Endothelial cell of umbilical vein (primary cell): ENCODE measurements at regions of chr7 and their contacts with region 1.

Region 1: DNA sequence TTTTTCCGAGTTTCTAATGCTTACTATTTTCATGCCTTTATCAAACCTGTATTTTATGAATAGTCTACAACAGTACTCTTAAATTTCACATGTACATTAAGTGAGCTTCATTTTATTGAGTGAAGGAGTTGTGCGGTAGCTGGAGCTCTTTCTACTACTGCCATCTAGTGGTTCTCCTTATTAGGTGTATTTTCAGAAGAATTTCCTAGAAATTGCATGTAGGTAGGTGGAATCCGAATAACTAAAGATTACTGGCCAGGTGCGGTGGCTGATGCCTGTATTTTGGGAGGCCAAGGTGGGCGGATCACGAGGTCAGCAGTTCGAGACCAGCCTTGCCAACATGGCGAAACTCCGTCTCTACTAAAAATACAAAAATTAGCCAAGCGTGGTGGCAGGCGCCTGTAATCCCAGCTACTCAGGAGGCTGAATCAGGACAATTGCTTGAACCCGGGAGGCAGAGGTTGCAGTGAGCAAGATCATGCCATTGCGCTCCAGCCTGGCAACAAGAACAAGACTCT is 38.3 kb downstream of the LRRC72 start:
- DNase-seq: peak; percentile 64
- H3K4me3 ChIP-seq: no peak overlapping the region
- H3K27ac ChIP-seq: no peak overlapping the region
- H3K4me1 ChIP-seq: peaks cover 6% of the 10 kb centered on the region
- H3K27me3 ChIP-seq: no peaks in the 10 kb centered on the region
- CTCF ChIP-seq: peak; percentile 42 to 61
- POLR2A ChIP-seq: no peak

Region 2: GRCh38 chr7:14717816-14718215 is 1847.2 kb before region 1 on chr7:
- CTCF ChIA-PET with region 1: interaction called, 12 read pairs
- POLR2A ChIA-PET with region 1: no interaction called
- dilution Hi-C with region 1: no loop called
- intact Hi-C with region 1: no loop called
- DNase-seq: peak; percentile 48
- H3K4me3 ChIP-seq: no peak overlapping the region
- H3K27ac ChIP-seq: no peak overlapping the region
- H3K4me1 ChIP-seq: peaks cover 7% of the 10 kb centered on the region
- H3K27me3 ChIP-seq: no peaks in the 10 kb centered on the region
- CTCF ChIP-seq: peak; percentile 21 to 30
- POLR2A ChIP-seq: no peak

Region 3: DNA sequence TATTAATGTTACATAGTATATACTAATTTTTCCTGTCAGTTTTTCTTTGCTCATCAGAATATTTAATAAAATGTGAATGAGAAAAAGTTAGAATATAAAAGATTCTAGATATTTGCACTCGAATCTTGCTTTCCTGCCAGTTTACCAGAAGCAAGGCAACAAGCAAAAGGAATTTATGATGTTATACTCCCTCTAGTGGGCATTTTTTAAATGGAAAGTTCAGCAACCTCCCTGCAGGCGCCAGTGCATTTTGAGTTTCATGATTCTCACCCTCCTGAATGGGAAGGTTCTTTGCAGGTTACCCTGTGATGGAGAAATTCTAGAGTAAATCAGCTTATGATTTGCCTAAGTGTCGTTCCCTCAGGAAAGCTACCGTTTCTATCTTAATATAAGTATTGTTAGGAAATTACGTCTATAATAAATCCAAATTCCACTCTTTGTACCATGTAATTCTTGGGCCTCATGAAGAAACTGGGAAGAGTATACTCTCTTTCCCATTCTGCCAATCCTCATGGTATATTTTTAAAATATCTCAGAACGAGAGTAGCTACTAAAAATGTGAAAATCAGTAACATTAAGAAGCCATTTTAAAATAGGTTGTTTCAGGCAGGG is 493.6 kb before region 1 on chr7:
- CTCF ChIA-PET with region 1: interaction called, 13 read pairs
- POLR2A ChIA-PET with region 1: no interaction called
- dilution Hi-C with region 1: no loop called
- intact Hi-C with region 1: no loop called
- DNase-seq: peak; percentile 70
- H3K4me3 ChIP-seq: no peak overlapping the region
- H3K27ac ChIP-seq: no peak overlapping the region
- H3K4me1 ChIP-seq: peaks cover 12% of the 10 kb centered on the region
- H3K27me3 ChIP-seq: no peaks in the 10 kb centered on the region
- CTCF ChIP-seq: peak; percentile 41 to 57
- POLR2A ChIP-seq: no peak

Region 4: GRCh38 chr7:16098585-16099179 is 466.3 kb before region 1 on chr7:
- CTCF ChIA-PET with region 1: interaction called, 35 read pairs
- POLR2A ChIA-PET with region 1: no interaction called
- dilution Hi-C with region 1: no loop called
- intact Hi-C with region 1: loop called (anchors 1 kb)
- DNase-seq: peak; percentile 85
- H3K4me3 ChIP-seq: no peak overlapping the region
- H3K27ac ChIP-seq: peak overlapping the region; percentile 86
- H3K4me1 ChIP-seq: peaks cover 22% of the 10 kb centered on the region
- H3K27me3 ChIP-seq: no peaks in the 10 kb centered on the region
- CTCF ChIP-seq: peak; percentile 64 to 70
- POLR2A ChIP-seq: no peak

Region 5: GRCh38 chr7:16129431-16130116 is 435.4 kb before region 1 on chr7:
- CTCF ChIA-PET with region 1: interaction called, 10 read pairs
- POLR2A ChIA-PET with region 1: no interaction called
- dilution Hi-C with region 1: no loop called
- intact Hi-C with region 1: no loop called
- DNase-seq: peak; percentile 55
- H3K4me3 ChIP-seq: no peak overlapping the region
- H3K27ac ChIP-seq: peak overlapping the region; percentile 47
- H3K4me1 ChIP-seq: peaks cover 22% of the 10 kb centered on the region
- H3K27me3 ChIP-seq: no peaks in the 10 kb centered on the region
- CTCF ChIP-seq: no peak
- POLR2A ChIP-seq: no peak

Region 6: DNA sequence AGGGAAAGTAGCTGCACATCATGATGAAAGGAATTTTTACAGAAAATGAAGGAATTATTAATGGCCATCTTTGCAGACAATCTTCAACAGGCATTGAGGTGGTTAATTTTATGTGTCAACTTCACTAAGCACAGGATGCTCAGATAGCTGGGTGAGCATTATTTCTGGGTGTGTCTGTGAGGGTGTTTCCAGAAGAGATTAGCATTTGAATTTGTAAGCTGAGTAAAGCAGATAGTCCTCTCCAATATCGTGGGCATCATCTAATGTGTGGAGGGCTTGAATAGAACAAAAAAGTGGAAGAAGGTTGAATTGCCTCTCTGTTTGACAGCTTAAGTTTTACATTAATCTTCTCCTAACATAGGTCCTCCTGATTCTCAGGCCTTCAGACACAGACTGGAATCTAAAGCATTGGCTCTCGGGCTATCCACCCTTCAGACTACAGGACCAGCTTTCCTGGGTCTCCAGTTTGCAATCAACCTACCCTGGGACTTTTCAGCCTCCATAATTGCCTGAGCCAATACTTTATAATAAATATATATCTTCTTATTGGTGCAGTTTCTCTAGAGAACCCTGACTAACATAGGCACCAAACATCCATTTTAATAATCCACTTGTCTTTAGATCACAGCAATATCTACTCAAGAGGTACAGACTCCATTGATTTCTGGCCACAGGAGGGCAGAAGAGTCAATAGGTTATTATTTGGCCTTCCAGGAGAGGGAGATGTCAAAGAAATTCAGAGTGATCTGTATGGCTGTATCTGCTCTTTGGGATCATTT is 133.1 kb before region 1 on chr7:
- CTCF ChIA-PET with region 1: interaction called, 67 read pairs
- POLR2A ChIA-PET with region 1: no interaction called
- dilution Hi-C with region 1: no loop called
- intact Hi-C with region 1: loop called (anchors 1 kb)
- DNase-seq: peak; percentile 18
- H3K4me3 ChIP-seq: no peak overlapping the region
- H3K27ac ChIP-seq: no peak overlapping the region
- H3K4me1 ChIP-seq: no peaks in the 10 kb centered on the region
- H3K27me3 ChIP-seq: no peaks in the 10 kb centered on the region
- CTCF ChIP-seq: peak in 1 of 2 donors; percentile 17
- POLR2A ChIP-seq: no peak

Region 7: GRCh38 chr7:16554518-16555236 is 10.3 kb before region 1 on chr7:
- CTCF ChIA-PET with region 1: interaction called, 85 read pairs
- POLR2A ChIA-PET with region 1: no interaction called
- dilution Hi-C with region 1: no loop called
- intact Hi-C with region 1: no loop called
- DNase-seq: no peak
- H3K4me3 ChIP-seq: no peak overlapping the region
- H3K27ac ChIP-seq: no peak overlapping the region
- H3K4me1 ChIP-seq: peaks cover 3% of the 10 kb centered on the region
- H3K27me3 ChIP-seq: no peaks in the 10 kb centered on the region
- CTCF ChIP-seq: no peak
- POLR2A ChIP-seq: no peak